ENCODE measurements at regions of chr11 and their contacts with region 1.

Region 1: GRCh38 chr11:17256512-17256911 is 20.0 kb upstream of the NUCB2 start:
- DNase-seq: no peak
- ATAC-seq: peak; percentile 87
- H3K4me3 Mint-ChIP-seq: no peak overlapping the region
- H3K27ac Mint-ChIP-seq: peak overlapping the region; percentile 5
- H3K4me1 Mint-ChIP-seq: peaks cover 19% of the 10 kb centered on the region
- H3K27me3 Mint-ChIP-seq: peaks cover 1% of the 10 kb centered on the region

Region 2: DNA sequence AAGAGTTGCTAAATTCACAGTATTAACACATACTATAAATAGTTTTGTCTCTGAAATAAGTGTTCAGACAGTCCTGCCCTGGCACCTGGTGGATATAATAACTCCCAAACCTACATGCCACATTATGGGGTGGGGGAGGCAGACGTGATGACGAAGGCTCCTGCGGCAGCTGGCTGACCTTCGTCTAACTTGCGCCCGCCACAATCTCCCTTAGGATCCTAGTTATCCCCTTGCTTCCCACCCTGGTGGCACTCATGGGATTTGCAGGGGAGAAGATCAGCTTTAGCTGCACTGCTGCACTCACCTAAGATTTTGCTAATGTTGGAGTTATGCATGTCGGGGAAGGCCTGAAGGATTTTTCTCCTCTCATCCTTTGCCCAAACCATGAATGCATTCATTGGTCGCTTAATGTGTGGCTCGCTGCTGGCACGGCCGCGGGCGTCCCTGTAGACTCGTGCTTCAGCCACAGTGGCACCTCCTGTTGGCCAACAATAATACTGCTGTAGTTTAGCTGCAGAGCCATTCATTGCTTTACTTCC is 1267.8 kb before region 1 on chr11:
- CTCF ChIA-PET with region 1: no interaction called
- POLR2A ChIA-PET with region 1: no interaction called
- intact Hi-C with region 1: no loop called
- DNase-seq: no peak
- ATAC-seq: no peak
- H3K4me3 Mint-ChIP-seq: no peak overlapping the region
- H3K27ac Mint-ChIP-seq: no peak overlapping the region
- H3K4me1 Mint-ChIP-seq: no peaks in the 10 kb centered on the region
- H3K27me3 Mint-ChIP-seq: peaks cover 2% of the 10 kb centered on the region

Region 3: GRCh38 chr11:17238391-17238790 is 18.1 kb before region 1 on chr11:
- CTCF ChIA-PET with region 1: no interaction called
- POLR2A ChIA-PET with region 1: no interaction called
- intact Hi-C with region 1: no loop called
- DNase-seq: no peak
- ATAC-seq: no peak
- H3K4me3 Mint-ChIP-seq: no peak overlapping the region
- H3K27ac Mint-ChIP-seq: no peak overlapping the region
- H3K4me1 Mint-ChIP-seq: no peaks in the 10 kb centered on the region
- H3K27me3 Mint-ChIP-seq: peaks cover 23% of the 10 kb centered on the region

Region 4: DNA sequence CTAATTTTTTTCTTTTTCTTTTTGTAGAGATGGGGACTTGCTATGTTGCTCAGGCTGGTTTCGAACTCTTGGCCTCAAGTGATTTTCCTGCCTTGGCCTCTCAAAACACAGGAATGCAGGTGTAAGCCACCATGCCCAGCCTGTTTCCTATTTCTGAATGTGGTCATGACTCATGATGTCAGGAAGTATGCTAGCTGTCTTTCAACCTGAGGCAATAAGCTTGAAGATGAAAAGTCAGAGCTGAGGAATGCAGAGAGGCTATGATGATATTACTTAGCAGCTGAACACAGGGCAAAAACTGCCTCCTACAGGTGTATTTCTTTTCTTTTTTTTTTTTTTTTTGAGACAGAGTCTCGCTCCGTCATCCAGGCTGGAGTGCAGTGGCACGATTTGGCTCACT is 11.0 kb after region 1 on chr11:
- CTCF ChIA-PET with region 1: no interaction called
- POLR2A ChIA-PET with region 1: no interaction called
- intact Hi-C with region 1: loop called in 1 of 2 experiments (anchors 1 kb)
- DNase-seq: peak; percentile 32
- ATAC-seq: peak; percentile 91
- H3K4me3 Mint-ChIP-seq: no peak overlapping the region
- H3K27ac Mint-ChIP-seq: no peak overlapping the region
- H3K4me1 Mint-ChIP-seq: peaks cover 14% of the 10 kb centered on the region
- H3K27me3 Mint-ChIP-seq: peaks cover 6% of the 10 kb centered on the region

Region 5: DNA sequence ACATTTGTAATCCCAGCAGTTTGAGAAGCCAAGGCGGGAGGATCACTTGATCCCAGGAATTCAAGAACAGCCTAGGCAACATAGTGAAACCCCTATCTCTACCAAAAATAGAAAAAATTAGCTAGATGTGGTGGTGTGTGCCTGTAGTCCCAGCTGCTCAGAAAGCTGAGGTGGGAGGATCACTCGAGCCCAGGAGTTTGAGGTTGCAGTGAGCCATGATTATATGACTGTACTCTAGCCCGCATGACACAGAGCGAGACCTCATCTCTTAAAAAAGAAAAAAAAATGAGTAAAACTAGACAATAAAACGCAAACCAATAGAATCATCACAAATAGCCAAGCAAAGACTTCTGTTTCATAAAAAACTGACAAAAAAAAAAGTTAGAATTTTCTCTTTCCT is 41.8 kb after region 1 on chr11:
- CTCF ChIA-PET with region 1: no interaction called
- POLR2A ChIA-PET with region 1: no interaction called
- intact Hi-C with region 1: loop called in 1 of 2 experiments (anchors 2 kb)
- DNase-seq: peak; percentile 83
- ATAC-seq: peak; percentile 82
- H3K4me3 Mint-ChIP-seq: no peak overlapping the region
- H3K27ac Mint-ChIP-seq: no peak overlapping the region
- H3K4me1 Mint-ChIP-seq: peaks cover 40% of the 10 kb centered on the region
- H3K27me3 Mint-ChIP-seq: no peaks in the 10 kb centered on the region

Measured in activated CD4-positive, alpha-beta T cell treated with anti-CD3 and anti-CD28 coated beads for 36 hours (primary cell).